Activated CD4-positive, alpha-beta memory T cell treated with anti-CD3 and anti-CD28 coated beads for 36 hours (primary cell): ENCODE measurements at regions of chr18 and their contacts with region 1.

Region 1: GRCh38 chr18:75478996-75479880 is 51.7 kb upstream of the SMIM21 start:
- DNase-seq: no peak
- H3K4me3 Mint-ChIP-seq: no peak overlapping the region
- H3K27ac Mint-ChIP-seq: no peak overlapping the region
- H3K4me1 Mint-ChIP-seq: peaks cover 2% of the 10 kb centered on the region
- H3K27me3 Mint-ChIP-seq: peaks cover 15% of the 10 kb centered on the region

Region 2: DNA sequence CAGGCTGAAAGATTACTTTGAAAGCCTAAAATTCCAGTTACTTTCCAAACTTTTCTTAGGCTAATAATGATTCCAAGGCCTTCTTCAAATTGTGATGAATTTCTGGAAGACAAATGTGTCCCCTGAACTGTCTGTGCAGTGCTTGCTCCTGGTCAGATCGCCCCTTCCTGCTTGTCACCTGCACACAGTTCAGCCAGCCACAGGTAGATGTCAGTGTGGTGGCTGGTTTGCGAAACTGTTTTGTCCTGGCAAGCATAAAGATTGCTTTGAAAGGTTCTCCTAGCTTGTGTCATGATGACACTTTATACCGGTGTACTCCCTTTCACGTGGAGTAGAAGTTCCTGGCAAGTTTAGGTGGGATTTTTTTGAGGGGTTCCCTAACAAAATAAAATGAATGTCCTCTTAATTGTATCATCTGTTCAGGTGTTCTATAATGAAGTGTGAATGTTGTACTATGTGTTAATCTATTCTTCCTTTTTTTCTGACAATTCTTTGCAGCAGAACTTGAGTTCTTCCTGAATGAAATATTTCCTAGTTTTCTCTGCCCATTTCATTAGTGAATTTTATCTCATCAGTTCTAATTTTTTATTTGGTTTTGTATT is 582.7 kb before region 1 on chr18:
- CTCF ChIA-PET with region 1: interaction called, 7 read pairs
- POLR2A ChIA-PET with region 1: no interaction called
- intact Hi-C with region 1: loop called (anchors 2 kb)
- DNase-seq: peak; percentile 56
- H3K4me3 Mint-ChIP-seq: no peak overlapping the region
- H3K27ac Mint-ChIP-seq: no peak overlapping the region
- H3K4me1 Mint-ChIP-seq: peaks cover 4% of the 10 kb centered on the region
- H3K27me3 Mint-ChIP-seq: no peaks in the 10 kb centered on the region

Region 3: GRCh38 chr18:75036917-75037688 is 442.1 kb before region 1 on chr18:
- CTCF ChIA-PET with region 1: no interaction called
- POLR2A ChIA-PET with region 1: no interaction called
- intact Hi-C with region 1: no loop called
- DNase-seq: no peak
- H3K4me3 Mint-ChIP-seq: no peak overlapping the region
- H3K27ac Mint-ChIP-seq: no peak overlapping the region
- H3K4me1 Mint-ChIP-seq: peaks cover 10% of the 10 kb centered on the region
- H3K27me3 Mint-ChIP-seq: no peaks in the 10 kb centered on the region

Region 4: DNA sequence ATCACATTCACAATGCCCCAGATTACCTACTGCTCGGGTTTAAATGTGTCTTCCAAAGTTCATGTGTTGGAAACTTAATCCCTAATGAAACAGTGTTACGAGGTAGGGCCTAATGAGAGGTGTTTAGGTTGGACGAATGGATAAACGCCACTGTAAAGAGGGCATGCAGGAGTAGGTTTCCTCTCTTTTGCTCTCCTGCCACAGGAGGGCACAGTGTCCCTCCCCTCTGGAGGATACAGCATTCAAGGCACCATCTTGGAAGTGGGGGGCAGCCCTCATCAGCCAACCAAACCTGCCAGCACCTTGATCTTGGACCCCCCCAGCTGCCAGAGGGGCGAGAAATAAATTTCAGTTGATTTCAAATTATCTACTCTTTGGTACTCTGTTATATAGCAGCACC is 165.1 kb before region 1 on chr18:
- CTCF ChIA-PET with region 1: no interaction called
- POLR2A ChIA-PET with region 1: no interaction called
- intact Hi-C with region 1: no loop called
- DNase-seq: no peak
- H3K4me3 Mint-ChIP-seq: no peak overlapping the region
- H3K27ac Mint-ChIP-seq: no peak overlapping the region
- H3K4me1 Mint-ChIP-seq: no peaks in the 10 kb centered on the region
- H3K27me3 Mint-ChIP-seq: no peaks in the 10 kb centered on the region

Region 5: DNA sequence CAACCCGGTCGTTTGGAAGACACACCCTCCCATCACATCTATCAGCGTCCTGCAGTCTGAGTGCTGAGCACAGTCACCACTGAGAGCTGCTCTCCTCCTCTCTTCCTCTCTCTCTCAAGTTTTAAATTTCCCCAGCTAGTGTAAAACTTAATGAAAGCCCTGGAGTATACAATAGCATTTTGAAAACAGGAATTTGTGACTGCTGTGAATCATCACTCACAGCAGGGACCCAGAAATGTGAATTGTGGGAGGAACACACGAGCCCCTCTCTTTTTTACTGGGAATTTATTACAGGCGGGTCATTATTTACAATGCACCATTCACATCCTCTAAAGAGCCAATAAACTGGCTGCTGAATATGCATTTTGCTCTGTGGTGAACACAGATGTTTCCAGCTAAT is 133.2 kb after region 1 on chr18:
- CTCF ChIA-PET with region 1: no interaction called
- POLR2A ChIA-PET with region 1: no interaction called
- intact Hi-C with region 1: no loop called
- DNase-seq: no peak
- H3K4me3 Mint-ChIP-seq: no peak overlapping the region
- H3K27ac Mint-ChIP-seq: no peak overlapping the region
- H3K4me1 Mint-ChIP-seq: no peaks in the 10 kb centered on the region
- H3K27me3 Mint-ChIP-seq: peaks cover 5% of the 10 kb centered on the region

Region 6: DNA sequence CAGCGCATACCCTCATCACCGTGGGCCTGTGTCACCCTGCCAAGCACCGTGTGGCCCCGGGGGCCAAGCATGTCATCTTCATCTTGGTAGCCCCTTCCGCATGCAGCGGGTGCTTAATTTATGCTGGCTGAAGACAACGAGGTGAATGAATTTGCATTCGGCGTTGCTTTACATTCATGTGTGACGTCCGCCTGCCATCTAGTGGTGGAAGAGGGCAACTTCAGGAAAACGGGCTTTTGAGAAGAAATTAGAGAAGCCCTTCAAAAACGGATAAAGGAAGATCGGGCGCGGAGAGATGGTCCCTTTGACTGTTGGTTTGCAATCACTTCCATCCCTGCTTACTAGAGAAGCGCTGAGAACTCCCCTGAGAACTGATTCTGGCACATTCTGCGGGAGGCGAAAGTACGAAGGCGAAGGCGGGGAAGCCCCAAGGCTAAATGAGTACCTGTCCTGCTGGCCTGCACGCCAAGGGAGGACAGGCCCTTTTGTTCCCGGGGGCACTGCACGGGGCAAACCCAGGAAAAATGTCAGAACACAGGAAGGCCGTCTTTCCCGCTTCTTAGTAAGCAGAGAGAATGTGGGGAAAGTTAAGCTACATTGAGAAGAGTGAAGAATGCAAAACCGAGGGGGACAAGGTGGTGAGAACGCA is 870.0 kb after region 1 on chr18:
- CTCF ChIA-PET with region 1: no interaction called
- POLR2A ChIA-PET with region 1: no interaction called
- intact Hi-C with region 1: loop called (anchors 2 kb)
- DNase-seq: peak; percentile 74
- H3K4me3 Mint-ChIP-seq: no peak overlapping the region
- H3K27ac Mint-ChIP-seq: no peak overlapping the region
- H3K4me1 Mint-ChIP-seq: peaks cover 6% of the 10 kb centered on the region
- H3K27me3 Mint-ChIP-seq: peaks cover 3% of the 10 kb centered on the region